T-cell (primary cell): ENCODE measurements at regions of chr1 and their contacts with region 1.

Region 1: GRCh38 chr1:40774266-40774998 is 9.2 kb upstream of the KCNQ4 start:
- DNase-seq: peak in 34 of 35 experiments; percentile 19 to 80 (median 54)
- ATAC-seq: peak; percentile 55 to 70 (median 64)
- H3K4me3 ChIP-seq: no peak overlapping the region
- H3K4me3 Mint-ChIP-seq: no peak overlapping the region
- H3K27ac ChIP-seq: no peak overlapping the region
- H3K27ac Mint-ChIP-seq: no peak overlapping the region
- H3K4me1 ChIP-seq: no peaks in the 10 kb centered on the region
- H3K4me1 Mint-ChIP-seq: peaks cover 0 to 12% (median 0%) of the 10 kb centered on the region in 3 donors
- H3K27me3 ChIP-seq: no peaks in the 10 kb centered on the region
- H3K27me3 Mint-ChIP-seq: no peaks in the 10 kb centered on the region

Region 2: GRCh38 chr1:40679165-40679953 is 95.1 kb before region 1 on chr1:
- CTCF ChIA-PET with region 1: no interaction called
- POLR2A ChIA-PET with region 1: no interaction called
- DNase-seq: no peak
- ATAC-seq: no peak
- H3K4me3 ChIP-seq: no peak overlapping the region
- H3K4me3 Mint-ChIP-seq: no peak overlapping the region
- H3K27ac ChIP-seq: no peak overlapping the region
- H3K27ac Mint-ChIP-seq: no peak overlapping the region
- H3K4me1 ChIP-seq: no peaks in the 10 kb centered on the region
- H3K4me1 Mint-ChIP-seq: no peaks in the 10 kb centered on the region
- H3K27me3 ChIP-seq: no peaks in the 10 kb centered on the region
- H3K27me3 Mint-ChIP-seq: peaks cover 0 to 6% of the 10 kb centered on the region in 2 donors

Region 3: DNA sequence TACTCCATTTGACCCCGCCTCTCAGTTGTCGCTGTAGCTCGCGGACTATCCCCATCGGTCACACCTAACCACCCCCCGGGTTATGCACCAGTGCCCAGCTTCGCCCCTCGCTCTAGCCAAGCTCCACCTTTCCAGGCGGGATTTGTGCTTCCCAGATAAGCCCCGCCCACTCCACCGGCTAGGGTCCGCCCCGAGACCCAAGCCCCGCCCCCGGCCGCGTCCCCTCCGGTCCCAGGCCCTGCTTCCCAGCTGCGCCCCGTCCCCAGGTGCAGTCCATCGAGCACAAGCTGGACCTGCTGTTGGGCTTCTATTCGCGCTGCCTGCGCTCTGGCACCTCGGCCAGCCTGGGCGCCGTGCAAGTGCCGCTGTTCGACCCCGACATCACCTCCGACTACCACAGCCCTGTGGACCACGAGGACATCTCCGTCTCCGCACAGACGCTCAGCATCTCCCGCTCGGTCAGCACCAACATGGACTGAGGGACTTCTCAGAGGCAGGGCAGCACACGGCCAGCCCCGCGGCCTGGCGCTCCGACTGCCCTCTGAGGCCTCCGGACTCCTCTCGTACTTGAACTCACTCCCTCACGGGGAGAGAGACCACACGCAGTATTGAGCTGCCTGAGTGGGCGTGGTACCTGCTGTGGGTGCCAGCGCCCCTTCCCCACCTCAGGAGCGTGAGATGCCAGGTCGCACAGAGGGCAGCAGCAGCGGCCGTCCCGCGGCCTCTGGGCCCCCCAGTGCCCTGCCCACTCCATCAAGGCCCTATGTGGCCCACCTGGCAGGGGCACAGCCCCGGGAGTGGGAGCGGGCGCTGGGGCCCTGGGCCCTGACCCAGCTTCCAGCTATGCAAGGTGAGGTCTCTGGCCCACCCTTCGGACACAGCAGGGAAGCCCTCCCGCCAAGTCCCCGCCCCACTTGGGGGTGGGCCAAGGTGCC is 63.9 kb after region 1 on chr1:
- CTCF ChIA-PET with region 1: no interaction called
- POLR2A ChIA-PET with region 1: no interaction called
- DNase-seq: no peak
- ATAC-seq: no peak
- H3K4me3 ChIP-seq: no peak overlapping the region
- H3K4me3 Mint-ChIP-seq: no peak overlapping the region
- H3K27ac ChIP-seq: no peak overlapping the region
- H3K27ac Mint-ChIP-seq: no peak overlapping the region
- H3K4me1 ChIP-seq: peaks cover 13 to 22% of the 10 kb centered on the region in 2 experiments
- H3K4me1 Mint-ChIP-seq: peaks cover 18 to 32% (median 27%) of the 10 kb centered on the region in 3 donors
- H3K27me3 ChIP-seq: peaks cover 0 to 11% of the 10 kb centered on the region in 2 experiments
- H3K27me3 Mint-ChIP-seq: no peaks in the 10 kb centered on the region

Region 4: GRCh38 chr1:40849801-40850592 is 75.6 kb after region 1 on chr1:
- CTCF ChIA-PET with region 1: interaction called, 44 to 59 read pairs
- POLR2A ChIA-PET with region 1: interaction called, 3 to 5 read pairs
- DNase-seq: peak; percentile 42 to 88 (median 70)
- ATAC-seq: peak; percentile 88 to 93 (median 91)
- H3K4me3 ChIP-seq: peak overlapping the region in 1 of 2 donors; percentile 4
- H3K4me3 Mint-ChIP-seq: peak overlapping the region in 2 of 3 donors; percentile 15 to 56
- H3K27ac ChIP-seq: no peak overlapping the region
- H3K27ac Mint-ChIP-seq: peak overlapping the region in 1 of 2 donors; percentile 41
- H3K4me1 ChIP-seq: peaks cover 6 to 9% of the 10 kb centered on the region in 2 experiments
- H3K4me1 Mint-ChIP-seq: peaks cover 9 to 12% (median 12%) of the 10 kb centered on the region in 3 donors
- H3K27me3 ChIP-seq: no peaks in the 10 kb centered on the region
- H3K27me3 Mint-ChIP-seq: no peaks in the 10 kb centered on the region

Region 5: DNA sequence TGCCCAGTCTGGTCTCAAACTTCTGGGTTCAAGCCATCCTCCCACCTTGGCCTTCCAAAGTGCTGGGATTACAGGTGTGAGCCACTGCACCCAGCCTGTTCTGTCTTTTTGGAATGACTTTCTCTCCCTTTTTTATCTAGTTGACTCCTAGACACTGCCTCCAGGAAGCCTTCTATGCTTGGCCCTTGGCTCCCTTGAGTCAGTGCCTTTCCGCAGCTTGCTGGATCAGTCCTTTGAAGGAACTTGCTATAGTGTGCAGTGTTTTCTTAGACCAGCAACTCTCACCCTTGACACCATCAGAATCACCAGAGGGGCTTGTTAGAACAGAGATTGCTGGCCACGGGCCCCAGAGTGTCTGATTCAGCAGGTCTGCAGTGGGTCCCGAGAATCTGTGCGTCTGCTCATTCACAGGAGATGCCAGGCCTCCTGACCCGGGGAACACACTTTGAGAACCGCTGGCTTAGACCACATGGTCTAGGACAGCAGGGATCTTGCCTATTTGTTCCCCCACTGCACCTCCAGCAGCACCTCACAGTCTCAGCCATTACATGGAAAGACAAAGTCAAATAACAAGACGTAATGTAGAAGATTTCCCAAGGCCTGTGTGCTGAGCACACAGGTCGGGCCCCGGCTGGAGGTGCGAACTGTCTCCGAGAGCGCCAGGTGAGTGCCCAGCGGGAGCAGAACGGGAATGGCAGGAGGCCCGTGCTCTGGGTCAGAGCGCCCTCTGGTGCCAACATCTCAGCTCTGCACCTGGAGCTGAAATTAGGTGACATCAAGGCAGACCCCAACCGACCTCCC is 177.7 kb after region 1 on chr1:
- CTCF ChIA-PET with region 1: interaction called, 3 to 22 read pairs
- POLR2A ChIA-PET with region 1: interaction called in 1 of 2 experiments, 6 read pairs
- DNase-seq: peak in 34 of 35 experiments; percentile 10 to 72 (median 34)
- ATAC-seq: peak; percentile 50 to 73 (median 69)
- H3K4me3 ChIP-seq: no peak overlapping the region
- H3K4me3 Mint-ChIP-seq: no peak overlapping the region
- H3K27ac ChIP-seq: no peak overlapping the region
- H3K27ac Mint-ChIP-seq: no peak overlapping the region
- H3K4me1 ChIP-seq: peaks cover 0 to 7% of the 10 kb centered on the region in 2 experiments
- H3K4me1 Mint-ChIP-seq: peaks cover 8 to 17% (median 9%) of the 10 kb centered on the region in 3 donors
- H3K27me3 ChIP-seq: peaks cover 2 to 29% of the 10 kb centered on the region in 2 experiments
- H3K27me3 Mint-ChIP-seq: peaks cover 12 to 28% of the 10 kb centered on the region in 2 donors